Activated CD4-positive, alpha-beta T cell treated with anti-CD3 and anti-CD28 coated beads for 36 hours (primary cell): ENCODE measurements at regions of chr2 and their contacts with region 1.

Region 1: GRCh38 chr2:27771548-27772335 is at the start of gene MRPL33:
- DNase-seq: peak; percentile 96
- ATAC-seq: peak; percentile 98
- H3K4me3 Mint-ChIP-seq: peak within 1 kb of the TSS; percentile 99
- H3K27ac Mint-ChIP-seq: peak within 1 kb of the TSS; percentile 99
- H3K4me1 Mint-ChIP-seq: peaks cover 42% of the 10 kb centered on the region
- H3K27me3 Mint-ChIP-seq: no peaks in the 10 kb centered on the region
- total RNA-seq, gene MRPL33: 44.7 to 68.0 TPM

Region 2: DNA sequence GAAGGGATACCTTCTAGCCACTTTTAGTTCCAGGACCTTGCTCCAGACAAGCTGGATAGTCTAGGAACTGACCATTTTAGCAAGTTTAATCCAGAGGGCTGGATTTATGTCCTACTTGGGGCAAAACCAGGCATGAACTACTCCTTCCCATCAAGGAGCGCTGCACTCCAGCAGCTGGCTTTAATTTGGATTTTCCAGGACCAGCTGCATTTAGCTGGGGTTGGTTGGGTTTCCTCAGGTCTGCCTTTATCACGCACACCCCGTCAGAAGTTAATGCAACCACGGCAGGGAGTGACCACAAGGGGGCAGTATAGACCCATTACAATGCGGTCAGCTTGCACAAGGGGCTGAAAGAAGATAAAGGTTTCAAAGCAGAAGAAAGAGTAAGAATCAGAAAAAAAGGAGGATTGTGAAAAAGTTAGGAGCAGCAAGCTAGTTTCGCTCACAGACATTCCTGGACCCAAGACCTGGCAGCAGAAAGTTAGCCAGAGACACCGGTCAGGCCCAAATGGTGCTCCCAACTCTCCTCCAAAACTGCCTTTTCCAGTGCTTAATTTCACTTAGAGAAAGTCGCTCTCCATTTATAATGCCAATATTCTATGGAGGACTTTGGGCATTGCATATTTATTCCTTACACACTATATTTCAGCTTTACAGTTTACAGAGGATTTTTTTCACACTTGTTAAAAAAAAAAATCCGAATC is 68.0 kb before region 1 on chr2:
- CTCF ChIA-PET with region 1: interaction called, 6 read pairs
- POLR2A ChIA-PET with region 1: no interaction called
- intact Hi-C with region 1: loop called in 1 of 2 experiments (anchors 1 kb)
- DNase-seq: peak; percentile 92
- ATAC-seq: peak; percentile 78
- H3K4me3 Mint-ChIP-seq: no peak overlapping the region
- H3K27ac Mint-ChIP-seq: peak overlapping the region; percentile 7
- H3K4me1 Mint-ChIP-seq: peaks cover 21% of the 10 kb centered on the region
- H3K27me3 Mint-ChIP-seq: no peaks in the 10 kb centered on the region

Region 3: GRCh38 chr2:27735263-27735953 is 36.3 kb before region 1 on chr2:
- CTCF ChIA-PET with region 1: interaction called, 3 read pairs
- POLR2A ChIA-PET with region 1: no interaction called
- intact Hi-C with region 1: loop called in 1 of 2 experiments (anchors 2 kb)
- DNase-seq: peak; percentile 86
- ATAC-seq: peak; percentile 91
- H3K4me3 Mint-ChIP-seq: peak overlapping the region; percentile 67
- H3K27ac Mint-ChIP-seq: peak overlapping the region; percentile 93
- H3K4me1 Mint-ChIP-seq: peaks cover 20% of the 10 kb centered on the region
- H3K27me3 Mint-ChIP-seq: no peaks in the 10 kb centered on the region

Region 4: DNA sequence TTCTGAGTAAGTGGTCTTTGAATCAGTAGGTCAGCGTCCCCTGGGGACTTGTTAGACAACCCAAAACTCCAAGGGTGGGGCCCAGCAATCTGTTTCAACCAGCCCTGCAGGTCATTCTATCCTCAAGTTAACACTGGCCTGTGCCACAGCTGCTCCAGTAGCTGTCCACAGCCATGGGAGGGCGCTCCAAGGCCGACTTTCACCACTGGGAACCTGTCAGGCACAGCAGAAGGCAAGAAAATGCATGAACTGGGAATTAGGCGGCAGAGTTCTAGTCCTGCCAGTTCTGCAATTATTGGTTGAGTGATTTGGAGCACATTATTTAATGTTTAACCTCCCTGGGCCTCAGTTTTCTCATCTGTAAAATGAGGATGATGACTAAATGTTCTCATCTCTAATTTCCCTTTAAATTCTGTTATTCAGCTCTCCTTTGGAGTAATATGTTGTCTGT is 17.6 kb before region 1 on chr2:
- CTCF ChIA-PET with region 1: interaction called, 12 read pairs
- POLR2A ChIA-PET with region 1: no interaction called
- intact Hi-C with region 1: no loop called
- DNase-seq: peak; percentile 92
- ATAC-seq: peak; percentile 99
- H3K4me3 Mint-ChIP-seq: no peak overlapping the region
- H3K27ac Mint-ChIP-seq: no peak overlapping the region
- H3K4me1 Mint-ChIP-seq: peaks cover 3% of the 10 kb centered on the region
- H3K27me3 Mint-ChIP-seq: peaks cover 3% of the 10 kb centered on the region

Region 5: DNA sequence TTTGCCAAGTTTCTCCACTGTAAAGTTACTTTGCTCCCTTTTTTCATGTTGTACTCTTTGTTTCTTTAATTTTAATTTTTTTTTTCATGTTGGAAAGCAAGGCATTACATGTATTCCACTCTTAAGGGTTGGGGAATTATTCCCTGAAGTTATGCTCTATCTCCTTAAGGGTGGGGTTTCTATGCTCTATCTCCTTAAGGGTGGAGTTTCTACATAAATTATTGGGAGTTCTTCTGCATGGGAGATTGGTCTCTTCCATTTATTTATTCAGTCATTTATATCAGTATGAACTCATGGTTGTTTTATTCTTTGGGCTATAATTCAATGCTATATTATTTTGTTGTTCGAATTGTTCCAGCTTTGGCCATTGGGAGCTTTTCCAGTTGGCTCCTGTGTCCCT is 11.0 kb after region 1 on chr2:
- CTCF ChIA-PET with region 1: no interaction called
- POLR2A ChIA-PET with region 1: no interaction called
- intact Hi-C with region 1: loop called in 1 of 2 experiments (anchors 1 kb)
- DNase-seq: no peak
- ATAC-seq: no peak
- H3K4me3 Mint-ChIP-seq: no peak overlapping the region
- H3K27ac Mint-ChIP-seq: no peak overlapping the region
- H3K4me1 Mint-ChIP-seq: peaks cover 12% of the 10 kb centered on the region
- H3K27me3 Mint-ChIP-seq: no peaks in the 10 kb centered on the region